ENCODE measurements at regions of chr11 and their contacts with region 1.

Region 1: DNA sequence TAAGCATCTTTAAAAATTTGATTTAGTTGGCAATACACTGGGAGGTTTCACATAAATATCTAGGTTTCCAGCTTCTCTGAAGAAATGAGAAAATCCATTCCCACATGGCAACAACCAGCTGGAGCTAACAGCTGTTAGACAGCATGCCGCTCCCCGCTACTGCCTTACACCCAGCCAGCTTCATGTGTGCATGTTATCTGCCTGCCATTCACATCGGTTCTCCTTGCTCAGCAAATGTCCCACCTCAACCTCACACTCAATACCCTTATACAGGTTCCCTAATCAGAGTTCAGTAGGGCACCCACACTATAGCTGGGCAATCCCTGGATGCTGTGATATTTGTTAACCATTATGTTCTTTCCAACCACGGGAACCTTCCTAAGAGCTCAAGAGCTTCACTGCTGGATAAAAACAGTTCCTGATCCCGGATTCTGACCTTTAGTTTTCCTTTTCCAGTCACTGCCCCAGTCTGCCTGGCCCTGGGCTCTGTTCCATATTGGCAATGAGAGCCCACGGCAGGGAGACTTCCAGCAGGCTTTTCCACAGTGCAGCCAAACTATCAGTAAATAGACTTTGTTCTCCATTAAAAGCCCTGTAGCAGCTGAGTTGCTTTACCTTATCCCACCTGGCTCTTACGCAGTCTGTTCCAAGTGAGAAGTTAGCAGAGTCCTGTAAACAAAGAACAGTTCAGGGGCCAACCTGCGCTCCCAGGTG is 8.6 kb downstream of the RPUSD4 start:
- DNase-seq: no peak
- ATAC-seq: peak in 3 of 4 donors; percentile 18 to 31 (median 23)
- H3K4me3 ChIP-seq: peak overlapping the region; percentile 33
- H3K27ac ChIP-seq: peak overlapping the region; percentile 79
- H3K4me1 ChIP-seq: peaks cover 67% of the 10 kb centered on the region
- H3K27me3 ChIP-seq: no peaks in the 10 kb centered on the region
- CTCF ChIP-seq: no peak

Region 2: DNA sequence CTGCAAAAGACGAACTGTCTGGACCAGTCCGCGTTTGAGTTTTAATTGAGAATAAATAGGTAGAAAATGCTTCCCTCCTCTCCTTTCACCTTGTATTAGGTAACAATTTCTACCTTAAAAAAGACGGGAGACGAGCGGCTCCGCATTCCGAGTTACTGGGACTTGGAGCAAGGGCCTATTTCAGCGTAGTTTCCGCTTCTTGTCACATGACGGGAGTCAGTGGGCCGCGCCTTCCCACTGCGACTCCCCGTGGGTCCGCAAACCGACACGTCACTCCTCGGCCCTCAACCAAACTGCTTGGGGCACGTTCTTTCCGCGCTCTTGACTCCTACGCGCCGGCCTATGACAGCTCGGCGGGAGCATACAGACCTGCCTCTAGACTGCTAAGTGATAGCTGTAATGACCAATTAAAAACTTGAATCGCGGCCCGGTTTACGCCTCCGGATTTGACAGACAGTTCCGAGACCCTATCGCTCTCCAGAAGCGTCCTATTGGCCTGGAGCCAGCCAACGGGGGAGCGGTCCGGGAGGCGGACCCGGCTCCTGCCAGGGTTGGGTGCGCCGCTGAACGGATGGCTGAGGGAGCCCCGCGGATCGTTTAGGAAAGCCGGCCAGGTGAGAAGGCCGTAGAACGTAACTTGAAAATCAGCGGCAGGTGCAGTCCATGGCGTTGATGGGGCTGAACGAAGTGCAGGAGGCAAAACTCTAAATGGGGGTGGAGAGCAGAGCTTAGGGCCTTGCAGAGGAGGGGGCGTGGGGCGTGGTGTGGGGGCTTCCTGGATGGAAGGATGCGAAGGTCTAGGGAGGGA is 610.3 kb before region 1 on chr11 and contains the start of gene STT3A:
- intact Hi-C with region 1: loop called in 1 of 2 experiments (anchors 5 kb)
- DNase-seq: peak; percentile 100
- ATAC-seq: peak; percentile 97 to 99 (median 98)
- H3K4me3 ChIP-seq: peak within 1 kb of the TSS; percentile 70
- H3K27ac ChIP-seq: peak within 1 kb of the TSS; percentile 96
- H3K4me1 ChIP-seq: peaks cover 20% of the 10 kb centered on the region
- H3K27me3 ChIP-seq: no peaks in the 10 kb centered on the region
- CTCF ChIP-seq: no peak
- total RNA-seq, gene STT3A: 27.2 to 33.1 (median 31.0) TPM